ENCODE measurements at regions of chr9 and their contacts with region 1.

Region 1: DNA sequence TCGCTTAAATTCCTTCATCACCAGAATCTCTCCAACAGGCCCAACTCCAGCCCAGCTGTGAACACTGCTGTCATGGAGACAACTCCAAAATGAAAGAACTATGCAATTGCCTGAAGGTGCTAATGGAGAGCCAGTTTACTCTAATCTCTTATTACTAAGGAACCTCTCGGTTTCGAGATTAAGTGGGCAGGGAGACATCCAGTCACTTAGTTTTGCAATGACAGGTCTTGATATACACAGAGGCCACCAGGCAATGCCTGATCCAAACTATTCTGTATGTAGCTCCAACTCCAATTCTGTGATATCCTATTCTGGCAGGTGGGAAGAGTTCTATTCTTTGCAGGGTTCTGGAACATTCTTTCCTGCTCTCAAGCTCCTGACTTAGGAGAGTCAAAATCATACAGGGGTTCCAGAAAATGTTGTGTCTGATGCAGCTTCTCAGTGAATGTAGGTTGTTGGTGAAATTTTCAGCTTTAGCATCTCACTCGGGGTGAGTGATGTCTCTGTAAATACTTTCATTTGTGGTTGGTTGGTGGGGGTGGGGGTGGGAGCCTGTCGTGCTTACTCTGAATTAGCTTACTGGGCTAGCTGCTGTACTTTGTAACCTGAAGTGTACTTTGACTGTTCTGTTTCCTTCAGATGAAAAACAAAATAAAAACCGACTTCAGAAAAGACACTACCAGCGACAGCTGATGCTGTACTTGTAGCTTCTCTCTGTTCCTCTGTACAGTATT is 170.9 kb downstream of the PALM2AKAP2 start:
- DNase-seq: peak; percentile 64
- H3K4me3 Mint-ChIP-seq: peak overlapping the region; percentile 23
- H3K27ac Mint-ChIP-seq: peak overlapping the region; percentile 82
- H3K4me1 Mint-ChIP-seq: peaks cover 30% of the 10 kb centered on the region
- H3K27me3 Mint-ChIP-seq: no peaks in the 10 kb centered on the region

Region 2: DNA sequence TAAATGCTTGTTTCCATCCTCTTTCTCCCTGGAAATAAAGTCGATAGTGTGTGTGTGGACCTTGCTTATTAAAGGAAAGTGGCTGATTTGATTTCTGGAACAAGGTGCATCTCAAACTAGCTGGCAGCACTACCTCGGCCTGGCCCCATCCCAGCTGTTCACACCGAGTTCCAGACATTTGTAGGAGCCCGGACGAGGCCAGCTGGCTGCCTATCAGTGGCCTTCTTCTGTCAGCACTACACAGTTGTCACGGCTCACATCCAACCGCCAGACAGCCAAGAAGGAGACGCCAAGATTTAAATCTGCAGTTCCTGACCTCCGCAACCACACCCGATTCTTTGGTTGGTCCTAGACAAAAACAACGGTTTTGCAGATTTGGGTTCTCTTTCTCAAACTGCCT is 107.2 kb before region 1 on chr9:
- CTCF ChIA-PET with region 1: no interaction called
- POLR2A ChIA-PET with region 1: no interaction called
- intact Hi-C with region 1: no loop called
- DNase-seq: no peak
- H3K4me3 Mint-ChIP-seq: no peak overlapping the region
- H3K27ac Mint-ChIP-seq: no peak overlapping the region
- H3K4me1 Mint-ChIP-seq: no peaks in the 10 kb centered on the region
- H3K27me3 Mint-ChIP-seq: no peaks in the 10 kb centered on the region

Region 3: GRCh38 chr9:109912726-109913460 is 38.0 kb before region 1 on chr9:
- CTCF ChIA-PET with region 1: interaction called, 8 read pairs
- POLR2A ChIA-PET with region 1: interaction called, 3 read pairs
- intact Hi-C with region 1: loop called (anchors 1 kb)
- DNase-seq: no peak
- H3K4me3 Mint-ChIP-seq: no peak overlapping the region
- H3K27ac Mint-ChIP-seq: no peak overlapping the region
- H3K4me1 Mint-ChIP-seq: peaks cover 16% of the 10 kb centered on the region
- H3K27me3 Mint-ChIP-seq: no peaks in the 10 kb centered on the region

Region 4: GRCh38 chr9:110048403-110048975 is 97.6 kb after region 1 on chr9:
- CTCF ChIA-PET with region 1: interaction called, 3 read pairs
- POLR2A ChIA-PET with region 1: interaction called, 13 read pairs
- intact Hi-C with region 1: loop called (anchors 1 kb)
- DNase-seq: peak; percentile 89
- H3K4me3 Mint-ChIP-seq: peak overlapping the region; percentile 90
- H3K27ac Mint-ChIP-seq: peak overlapping the region; percentile 72
- H3K4me1 Mint-ChIP-seq: peaks cover 39% of the 10 kb centered on the region
- H3K27me3 Mint-ChIP-seq: peaks cover 13% of the 10 kb centered on the region

Region 5: GRCh38 chr9:110116543-110116885 is 165.6 kb after region 1 on chr9:
- CTCF ChIA-PET with region 1: no interaction called
- POLR2A ChIA-PET with region 1: no interaction called
- intact Hi-C with region 1: no loop called
- DNase-seq: no peak
- H3K4me3 Mint-ChIP-seq: no peak overlapping the region
- H3K27ac Mint-ChIP-seq: no peak overlapping the region
- H3K4me1 Mint-ChIP-seq: no peaks in the 10 kb centered on the region
- H3K27me3 Mint-ChIP-seq: no peaks in the 10 kb centered on the region